OCI-LY7 (cell line): ENCODE measurements at regions of chr6 and their contacts with region 1.

Region 1: GRCh38 chr6:32984605-32985389 is 16.4 kb downstream of the BRD2 start:
- DNase-seq: peak; percentile 93
- H3K4me3 ChIP-seq: no peak overlapping the region
- H3K27ac ChIP-seq: peak overlapping the region; percentile 55
- H3K4me1 ChIP-seq: peaks cover 40% of the 10 kb centered on the region
- CTCF ChIP-seq: peak; percentile 97

Region 2: GRCh38 chr6:32763427-32763826 is 221.4 kb before region 1 on chr6 and contains the start of gene HLA-DQB2:
- CTCF ChIA-PET with region 1: no interaction called
- POLR2A ChIA-PET with region 1: no interaction called
- intact Hi-C with region 1: no loop called
- DNase-seq: peak; percentile 53
- H3K4me3 ChIP-seq: no peak within 1 kb of the TSS
- H3K27ac ChIP-seq: no peak within 1 kb of the TSS
- H3K4me1 ChIP-seq: no peaks in the 10 kb centered on the region
- CTCF ChIP-seq: no peak
- total RNA-seq, gene HLA-DQB2: not detected in 2 replicates

Region 3: DNA sequence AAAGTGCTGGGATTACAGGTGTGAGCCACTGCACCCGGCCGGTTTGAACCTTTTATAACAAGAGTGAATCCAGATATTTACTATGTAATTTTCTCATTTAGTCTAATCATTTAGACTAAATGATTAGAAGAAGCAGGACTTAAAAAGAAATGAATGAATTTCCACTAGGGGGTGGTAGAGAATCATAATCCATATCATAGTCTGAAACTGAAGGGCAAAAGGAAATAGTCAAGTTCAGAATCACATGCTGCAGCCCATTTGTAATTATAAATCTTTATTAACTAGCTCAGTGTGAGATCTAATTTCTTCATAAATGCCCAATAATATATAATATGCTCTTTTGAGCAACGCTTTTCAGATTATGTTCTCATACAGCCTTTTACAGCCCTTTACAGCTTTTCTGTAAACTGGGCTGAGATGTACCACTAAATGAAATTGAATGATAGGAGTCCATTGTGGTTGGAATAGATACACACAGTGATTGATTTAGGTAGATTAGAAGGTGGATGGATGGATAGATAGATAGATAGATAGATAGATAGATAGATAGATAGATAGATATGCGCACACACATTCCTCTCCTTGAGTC is 99.0 kb before region 1 on chr6:
- CTCF ChIA-PET with region 1: interaction called, 14 read pairs
- POLR2A ChIA-PET with region 1: interaction called, 5 read pairs
- intact Hi-C with region 1: loop called (anchors 1 kb)
- DNase-seq: peak; percentile 86
- H3K4me3 ChIP-seq: no peak overlapping the region
- H3K27ac ChIP-seq: no peak overlapping the region
- H3K4me1 ChIP-seq: peaks cover 19% of the 10 kb centered on the region
- CTCF ChIP-seq: peak; percentile 86

Region 4: GRCh38 chr6:32933636-32934085 is 51.1 kb before region 1 on chr6:
- CTCF ChIA-PET with region 1: interaction called, 11 read pairs
- POLR2A ChIA-PET with region 1: no interaction called
- intact Hi-C with region 1: no loop called
- DNase-seq: peak; percentile 77
- H3K4me3 ChIP-seq: no peak overlapping the region
- H3K27ac ChIP-seq: peak overlapping the region; percentile 34
- H3K4me1 ChIP-seq: peaks cover 37% of the 10 kb centered on the region
- CTCF ChIP-seq: peak; percentile 99

Region 5: DNA sequence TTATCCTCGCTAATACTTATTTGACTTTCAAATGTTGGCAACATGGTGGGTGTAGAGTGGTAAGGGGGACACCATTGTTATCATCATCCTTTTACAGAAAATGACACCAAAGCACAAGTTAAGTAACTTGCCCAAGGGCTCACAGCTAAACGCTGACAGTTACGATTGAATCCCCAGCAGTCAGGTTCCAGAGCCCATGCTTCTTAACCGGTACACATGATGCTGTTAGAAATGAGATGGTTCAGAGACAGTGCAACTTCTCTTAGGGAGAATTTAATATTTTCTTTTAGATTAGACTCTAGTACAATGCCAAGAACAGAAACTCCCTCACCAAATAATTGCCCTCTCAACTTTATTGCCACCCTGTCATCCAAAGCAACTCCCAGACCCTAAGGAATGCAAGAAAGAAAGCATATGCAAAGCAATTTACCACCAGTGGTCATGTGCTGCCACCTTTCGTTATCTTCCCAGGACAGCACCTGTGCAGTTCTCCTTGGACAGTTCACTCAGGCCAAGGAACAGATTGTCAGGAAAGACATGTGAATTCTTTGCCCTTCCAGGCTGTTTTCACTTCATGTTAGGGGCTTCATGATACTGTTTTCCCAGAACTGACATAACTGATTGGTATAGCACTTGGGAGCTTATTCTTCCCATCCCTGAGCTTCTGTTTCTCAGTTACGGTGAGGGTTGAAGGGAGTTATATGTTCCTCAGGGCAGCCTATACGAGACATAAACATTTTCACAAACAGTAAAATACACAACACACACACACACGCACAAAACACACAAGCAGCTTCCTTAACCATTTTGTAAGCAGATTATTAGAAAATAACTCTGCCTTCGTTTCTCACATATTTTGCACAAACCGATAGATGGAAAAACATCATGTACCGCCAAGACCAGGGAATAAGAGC is 37.0 kb before region 1 on chr6:
- CTCF ChIA-PET with region 1: interaction called, 14 read pairs
- POLR2A ChIA-PET with region 1: interaction called, 24 read pairs
- intact Hi-C with region 1: loop called (anchors 1 kb)
- DNase-seq: peak; percentile 73
- H3K4me3 ChIP-seq: peak overlapping the region; percentile 75
- H3K27ac ChIP-seq: peak overlapping the region; percentile 99
- H3K4me1 ChIP-seq: peaks cover 84% of the 10 kb centered on the region
- CTCF ChIP-seq: peak; percentile 97